ENCODE measurements at regions of chr18 and their contacts with region 1.

Region 1: GRCh38 chr18:57561728-57562423 is 24.6 kb downstream of the FECH start:
- DNase-seq: peak in 4 of 5 donors; percentile 35 to 53 (median 44)
- H3K4me3 ChIP-seq: no peak overlapping the region
- H3K4me3 Mint-ChIP-seq: no peak overlapping the region
- H3K27ac ChIP-seq: no peak overlapping the region
- H3K27ac Mint-ChIP-seq: peak overlapping the region in 2 of 7 donors; percentile 23 to 25
- H3K4me1 ChIP-seq: no peaks in the 10 kb centered on the region
- H3K4me1 Mint-ChIP-seq: peaks cover 0 to 6% (median 3%) of the 10 kb centered on the region in 4 donors
- H3K27me3 ChIP-seq: no peaks in the 10 kb centered on the region
- H3K27me3 Mint-ChIP-seq: no peaks in the 10 kb centered on the region

Region 2: DNA sequence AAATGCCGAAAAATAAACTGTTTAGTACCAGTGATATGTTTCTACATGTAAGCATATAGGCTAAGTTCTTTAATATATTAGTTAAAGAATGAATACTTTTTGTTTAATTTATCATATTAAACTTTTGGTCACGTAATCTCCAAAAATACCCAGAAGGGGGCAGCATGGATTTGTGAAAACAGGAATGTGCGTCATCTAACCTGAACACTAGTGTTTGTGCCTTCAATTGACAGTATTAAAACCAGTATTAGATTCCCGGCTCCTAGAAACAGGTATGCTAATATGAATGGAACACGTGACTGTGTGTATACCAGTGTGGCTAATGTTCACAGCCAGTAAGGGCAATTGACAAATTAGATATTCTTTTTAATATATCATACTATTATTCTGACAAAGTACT is 858.9 kb before region 1 on chr18:
- CTCF ChIA-PET with region 1: interaction called, 19 read pairs
- POLR2A ChIA-PET with region 1: no interaction called
- intact Hi-C with region 1: loop called (anchors 1 kb)
- DNase-seq: peak in 4 of 5 donors; percentile 4 to 28 (median 18)
- H3K4me3 ChIP-seq: no peak overlapping the region
- H3K4me3 Mint-ChIP-seq: no peak overlapping the region
- H3K27ac ChIP-seq: no peak overlapping the region
- H3K27ac Mint-ChIP-seq: no peak overlapping the region
- H3K4me1 ChIP-seq: no peaks in the 10 kb centered on the region
- H3K4me1 Mint-ChIP-seq: no peaks in the 10 kb centered on the region
- H3K27me3 ChIP-seq: no peaks in the 10 kb centered on the region
- H3K27me3 Mint-ChIP-seq: no peaks in the 10 kb centered on the region

Region 3: GRCh38 chr18:56748698-56749268 is 813.1 kb before region 1 on chr18:
- CTCF ChIA-PET with region 1: interaction called, 6 read pairs
- POLR2A ChIA-PET with region 1: no interaction called
- intact Hi-C with region 1: loop called (anchors 1 kb)
- DNase-seq: peak in 4 of 5 donors; percentile 7 to 21 (median 14)
- H3K4me3 ChIP-seq: no peak overlapping the region
- H3K4me3 Mint-ChIP-seq: no peak overlapping the region
- H3K27ac ChIP-seq: no peak overlapping the region
- H3K27ac Mint-ChIP-seq: no peak overlapping the region
- H3K4me1 ChIP-seq: peaks cover 14% of the 10 kb centered on the region
- H3K4me1 Mint-ChIP-seq: peaks cover 18 to 26% (median 18%) of the 10 kb centered on the region in 4 donors
- H3K27me3 ChIP-seq: no peaks in the 10 kb centered on the region
- H3K27me3 Mint-ChIP-seq: no peaks in the 10 kb centered on the region

Region 4: GRCh38 chr18:56869189-56869777 is 692.6 kb before region 1 on chr18:
- CTCF ChIA-PET with region 1: interaction called, 3 read pairs
- POLR2A ChIA-PET with region 1: no interaction called
- intact Hi-C with region 1: loop called (anchors 5 kb)
- DNase-seq: peak in 3 of 5 donors; percentile 0 to 6 (median 3)
- H3K4me3 ChIP-seq: no peak overlapping the region
- H3K4me3 Mint-ChIP-seq: no peak overlapping the region
- H3K27ac ChIP-seq: no peak overlapping the region
- H3K27ac Mint-ChIP-seq: no peak overlapping the region
- H3K4me1 ChIP-seq: peaks cover 12% of the 10 kb centered on the region
- H3K4me1 Mint-ChIP-seq: peaks cover 0 to 16% (median 9%) of the 10 kb centered on the region in 4 donors
- H3K27me3 ChIP-seq: no peaks in the 10 kb centered on the region
- H3K27me3 Mint-ChIP-seq: no peaks in the 10 kb centered on the region

Region 5: DNA sequence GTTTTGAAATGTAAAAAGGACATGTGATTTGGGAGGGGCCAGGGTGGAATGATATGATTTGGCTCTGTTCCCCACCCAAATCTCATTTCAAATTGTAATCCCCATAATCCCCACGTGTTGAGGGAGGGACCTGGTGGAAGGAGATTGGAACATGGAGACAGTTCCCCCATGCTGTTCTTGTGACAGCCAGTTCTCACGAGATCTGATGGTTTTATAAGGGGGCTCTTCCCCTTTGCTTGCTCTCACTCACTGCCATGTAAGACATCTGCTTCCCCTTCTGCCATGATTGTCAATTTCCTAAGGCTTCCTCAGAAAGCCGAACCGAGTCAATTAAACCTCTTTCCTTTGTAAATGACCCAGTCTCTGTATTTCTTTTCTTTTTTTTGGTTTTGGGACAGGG is 14.6 kb before region 1 on chr18:
- CTCF ChIA-PET with region 1: interaction called, 17 read pairs
- POLR2A ChIA-PET with region 1: no interaction called
- intact Hi-C with region 1: no loop called
- DNase-seq: no peak
- H3K4me3 ChIP-seq: no peak overlapping the region
- H3K4me3 Mint-ChIP-seq: no peak overlapping the region
- H3K27ac ChIP-seq: no peak overlapping the region
- H3K27ac Mint-ChIP-seq: no peak overlapping the region
- H3K4me1 ChIP-seq: no peaks in the 10 kb centered on the region
- H3K4me1 Mint-ChIP-seq: no peaks in the 10 kb centered on the region
- H3K27me3 ChIP-seq: no peaks in the 10 kb centered on the region
- H3K27me3 Mint-ChIP-seq: no peaks in the 10 kb centered on the region